ENCODE measurements at regions of chr15 and their contacts with region 1.

Region 1: GRCh38 chr15:39908186-39908585 is 11.9 kb downstream of the GPR176 start:
- DNase-seq: peak; percentile 92
- H3K4me3 ChIP-seq: no peak overlapping the region
- H3K27ac ChIP-seq: peak overlapping the region; percentile 37
- H3K4me1 ChIP-seq: peaks cover 31% of the 10 kb centered on the region
- H3K27me3 ChIP-seq: no peaks in the 10 kb centered on the region
- CTCF ChIP-seq: no peak

Region 2: DNA sequence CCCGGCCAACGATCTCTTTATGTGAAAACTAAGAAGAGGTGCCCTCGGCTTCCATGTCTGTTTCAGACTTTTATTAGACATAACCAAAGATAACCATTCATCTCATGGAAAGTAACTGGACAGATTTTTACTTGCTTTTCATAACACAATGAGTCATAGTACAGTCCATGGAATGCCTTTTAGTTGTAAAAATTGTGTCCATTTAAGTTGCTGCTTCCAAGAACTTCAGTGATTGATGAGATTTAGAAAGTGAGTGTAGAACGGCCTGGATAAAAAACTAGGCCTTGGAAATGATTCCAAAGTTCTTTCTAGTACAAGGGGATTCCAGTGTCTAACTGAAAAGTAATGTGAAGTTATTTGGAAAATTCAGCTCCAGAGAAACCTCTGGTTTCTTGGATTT is 36.5 kb after region 1 on chr15:
- CTCF ChIA-PET with region 1: no interaction called
- dilution Hi-C with region 1: loop called (anchors 5 kb)
- in situ Hi-C with region 1: no loop called
- intact Hi-C with region 1: no loop called
- DNase-seq: no peak
- H3K4me3 ChIP-seq: no peak overlapping the region
- H3K27ac ChIP-seq: no peak overlapping the region
- H3K4me1 ChIP-seq: peaks cover 9% of the 10 kb centered on the region
- H3K27me3 ChIP-seq: no peaks in the 10 kb centered on the region
- CTCF ChIP-seq: no peak

Region 3: GRCh38 chr15:40016224-40016865 is 108.2 kb after region 1 on chr15:
- CTCF ChIA-PET with region 1: no interaction called
- dilution Hi-C with region 1: no loop called
- in situ Hi-C with region 1: no loop called
- intact Hi-C with region 1: no loop called
- DNase-seq: no peak
- H3K4me3 ChIP-seq: no peak overlapping the region
- H3K27ac ChIP-seq: no peak overlapping the region
- H3K4me1 ChIP-seq: no peaks in the 10 kb centered on the region
- H3K27me3 ChIP-seq: no peaks in the 10 kb centered on the region
- CTCF ChIP-seq: no peak

Measured in mammary epithelial cell (primary cell).